Activated CD4-positive, alpha-beta memory T cell treated with anti-CD3 and anti-CD28 coated beads, Interleukin-2, amount 10 ng/mL, durations not matched to agents 7 days and 5 days (primary cell): ENCODE measurements at regions of chr17 and their contacts with region 1.

Region 1: DNA sequence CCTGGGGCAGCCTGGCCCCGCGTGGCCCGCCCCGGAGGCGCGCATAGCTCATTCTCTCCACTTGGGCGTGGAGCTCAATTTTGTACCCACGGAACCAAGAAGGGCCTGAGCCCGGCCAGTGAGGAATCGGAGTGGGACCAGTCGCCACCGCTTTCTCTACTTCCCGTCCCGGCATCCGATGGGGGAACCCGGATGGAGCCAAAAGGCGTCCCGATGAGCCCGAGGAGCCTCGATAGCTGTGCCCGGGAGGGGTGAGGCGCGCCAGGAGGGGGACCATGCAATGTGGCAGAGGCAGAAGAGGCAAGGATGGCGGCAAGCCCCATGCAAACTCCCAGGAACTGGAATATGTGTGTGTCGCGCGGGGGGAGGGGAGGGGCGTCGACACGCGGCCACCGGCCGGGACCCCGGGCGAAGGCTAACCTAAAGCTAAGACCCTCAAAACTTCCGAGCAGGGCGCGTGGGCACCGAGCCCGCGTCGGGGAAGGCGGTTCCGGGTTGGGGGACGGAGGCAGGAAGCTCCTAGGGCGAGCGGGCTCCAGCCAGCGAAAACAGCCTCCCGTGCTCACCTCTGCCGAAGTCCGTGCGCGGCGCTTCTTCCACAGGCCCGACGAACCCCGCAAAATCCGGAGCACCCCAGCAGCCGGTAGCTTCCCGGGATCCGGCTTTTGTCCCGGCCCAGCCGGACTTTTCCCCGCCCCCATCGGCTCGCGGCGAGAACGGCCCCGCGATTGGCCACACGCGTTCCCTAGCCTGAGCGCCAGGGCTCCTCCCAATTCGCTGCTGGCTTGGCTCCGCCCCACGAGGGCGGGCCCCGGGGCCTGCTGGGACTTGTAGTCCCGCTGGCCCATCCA is at the start of gene ACLY:
- DNase-seq: peak; percentile 97
- H3K4me3 Mint-ChIP-seq: peak within 1 kb of the TSS; percentile 96
- H3K27ac Mint-ChIP-seq: peak within 1 kb of the TSS; percentile 90
- H3K4me1 Mint-ChIP-seq: peaks cover 38% of the 10 kb centered on the region
- H3K27me3 Mint-ChIP-seq: no peaks in the 10 kb centered on the region
- total RNA-seq, gene ACLY: 177 to 183 TPM

Region 2: GRCh38 chr17:41864836-41865595 is 53.5 kb before region 1 on chr17 and contains the start of gene KLHL11:
- CTCF ChIA-PET with region 1: interaction called, 3 read pairs
- POLR2A ChIA-PET with region 1: interaction called, 22 read pairs
- DNase-seq: peak; percentile 91
- H3K4me3 Mint-ChIP-seq: no peak within 1 kb of the TSS
- H3K27ac Mint-ChIP-seq: no peak within 1 kb of the TSS
- H3K4me1 Mint-ChIP-seq: peaks cover 49% of the 10 kb centered on the region
- H3K27me3 Mint-ChIP-seq: no peaks in the 10 kb centered on the region
- total RNA-seq, gene KLHL11: 13.9 to 14.4 TPM

Region 3: DNA sequence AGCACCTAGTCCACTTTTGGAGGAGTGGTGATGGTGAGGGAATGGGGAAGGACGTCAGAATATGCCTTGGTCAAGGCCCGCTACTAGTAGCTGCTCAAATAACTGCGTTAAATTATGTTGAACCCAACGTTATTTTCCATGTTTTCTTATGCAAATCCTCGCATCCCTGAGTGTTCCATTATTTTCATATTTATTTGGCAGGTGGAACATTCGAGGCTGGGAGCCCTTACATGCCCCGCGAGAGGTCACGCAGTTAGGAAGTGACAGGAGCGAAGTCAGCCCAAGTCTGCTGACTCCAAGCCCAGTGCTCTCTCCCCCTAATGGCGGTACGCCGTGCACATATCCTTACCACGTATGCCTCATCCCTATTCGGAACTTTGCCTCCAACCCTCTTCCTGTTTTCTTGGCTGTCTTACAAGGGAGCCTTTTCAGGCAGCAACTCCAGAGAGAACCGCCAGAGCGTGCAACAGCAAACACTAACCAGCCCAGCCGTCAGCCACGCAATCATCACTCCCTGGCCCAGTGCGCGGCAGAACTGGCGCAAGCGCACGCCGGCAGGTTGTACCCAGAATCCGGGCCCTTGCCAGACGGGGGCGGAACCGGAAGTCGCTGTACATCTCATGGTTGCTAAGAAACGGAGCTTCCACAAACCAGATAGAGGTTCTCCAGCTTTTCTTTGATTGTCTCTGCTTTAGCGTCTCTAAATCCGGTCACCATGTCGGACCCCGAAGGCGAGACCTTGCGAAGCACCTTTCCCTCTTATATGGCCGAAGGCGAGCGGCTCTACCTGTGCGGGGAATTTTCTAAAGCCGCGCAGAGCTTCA is 11.7 kb after region 1 on chr17 and contains the start of gene ODAD4:
- CTCF ChIA-PET with region 1: interaction called, 21 read pairs
- POLR2A ChIA-PET with region 1: interaction called, 108 read pairs
- DNase-seq: peak; percentile 97
- H3K4me3 Mint-ChIP-seq: peak within 1 kb of the TSS; percentile 95
- H3K27ac Mint-ChIP-seq: peak within 1 kb of the TSS; percentile 96
- H3K4me1 Mint-ChIP-seq: peaks cover 60% of the 10 kb centered on the region
- H3K27me3 Mint-ChIP-seq: no peaks in the 10 kb centered on the region
- total RNA-seq, gene ODAD4: 1.7 to 2.0 TPM

Region 4: DNA sequence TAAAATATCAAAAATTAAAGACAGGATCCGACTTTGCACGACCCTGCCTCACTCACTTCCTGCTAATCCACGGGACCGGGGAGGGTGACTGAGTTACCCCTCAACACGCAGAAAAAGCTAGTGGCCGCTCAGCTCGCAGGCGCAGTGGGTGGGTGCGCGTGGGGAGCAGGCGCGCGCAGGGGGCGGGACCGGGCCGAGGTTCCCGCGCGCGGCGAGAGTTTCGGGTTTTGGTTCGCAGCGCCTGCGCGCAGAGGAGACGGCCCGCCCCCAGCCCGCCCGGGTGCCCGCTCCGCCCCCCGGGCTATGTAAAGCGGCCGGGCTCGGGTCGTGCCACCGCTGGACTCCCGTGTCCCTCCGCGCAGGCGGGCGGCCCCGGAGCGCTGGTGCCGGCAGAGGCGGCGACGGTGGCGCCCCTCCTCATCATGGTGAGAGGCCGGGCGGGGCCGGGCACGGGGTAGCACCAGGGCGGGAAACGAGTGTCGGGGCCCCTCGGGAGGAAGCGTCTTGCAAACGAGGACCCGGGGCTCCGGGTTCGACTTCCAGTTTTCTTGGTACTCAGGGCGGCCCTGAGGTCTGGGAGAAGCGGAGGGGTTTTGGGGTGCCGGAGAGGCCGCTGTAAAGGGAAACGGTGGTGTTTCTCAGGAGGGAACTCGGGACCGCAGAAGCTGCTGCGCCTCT is 48.1 kb after region 1 on chr17 and contains the start of gene CNP:
- CTCF ChIA-PET with region 1: interaction called, 6 read pairs
- POLR2A ChIA-PET with region 1: interaction called, 35 read pairs
- DNase-seq: peak; percentile 93
- H3K4me3 Mint-ChIP-seq: peak within 1 kb of the TSS; percentile 81
- H3K27ac Mint-ChIP-seq: peak within 1 kb of the TSS; percentile 84
- H3K4me1 Mint-ChIP-seq: peaks cover 50% of the 10 kb centered on the region
- H3K27me3 Mint-ChIP-seq: no peaks in the 10 kb centered on the region
- total RNA-seq, gene CNP: 89.8 to 91.0 TPM